Gastrocnemius medialis (tissue), 4 donors: ENCODE measurements at regions of chr19 and their contacts with region 1.

Region 1: DNA sequence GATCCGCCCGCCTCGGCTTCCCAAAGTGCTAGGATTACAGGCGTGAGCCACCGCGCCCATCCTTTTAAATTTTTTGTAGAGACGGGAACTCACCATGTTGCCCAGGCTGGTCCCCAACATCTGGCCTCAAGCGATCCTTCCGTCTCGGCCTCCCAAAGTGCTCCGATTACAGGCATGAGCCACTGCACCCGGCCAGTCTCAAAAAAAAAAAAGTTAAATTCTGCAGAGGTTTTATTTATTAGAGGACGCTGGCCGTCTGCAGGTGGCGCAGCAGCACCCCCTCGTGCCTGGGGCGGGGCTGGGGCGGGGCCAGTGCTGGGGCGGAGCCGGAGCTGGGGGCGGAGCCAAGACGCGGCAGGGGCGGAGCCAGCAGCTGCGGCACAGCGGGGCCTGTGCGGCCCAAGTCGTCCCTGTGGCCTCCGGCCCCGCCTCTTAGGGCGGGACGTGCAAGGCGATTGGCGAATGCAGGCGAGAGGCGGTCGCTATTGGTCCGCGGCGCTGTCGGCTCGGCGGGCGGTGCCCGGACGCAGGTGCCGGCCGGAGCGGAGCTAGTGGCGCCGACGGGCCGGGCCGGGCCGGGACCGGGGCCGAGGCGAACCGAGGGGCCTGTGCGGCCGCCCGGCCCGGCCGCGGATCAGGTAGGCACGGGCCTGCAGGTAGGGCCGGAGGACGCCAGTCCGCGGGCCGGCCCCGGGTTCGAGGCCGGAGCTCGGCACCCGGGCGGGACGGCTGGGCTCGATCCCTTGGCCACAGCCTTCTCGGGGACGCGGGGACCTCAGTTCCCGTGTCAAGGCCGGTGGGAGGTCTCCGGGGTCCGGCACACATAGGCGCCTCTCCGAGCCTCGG is at the start of gene MARCHF2:
- DNase-seq: peak; percentile 93 to 97
- ATAC-seq: peak; percentile 98 to 99
- H3K4me3 ChIP-seq: peak within 1 kb of the TSS; percentile 67 to 83 (median 69)
- H3K27ac ChIP-seq: peak within 1 kb of the TSS; percentile 65 to 86 (median 76)
- H3K4me1 ChIP-seq: peaks cover 14 to 27% of the 10 kb centered on the region in 2 donors
- H3K27me3 ChIP-seq: no peaks in the 10 kb centered on the region
- CTCF ChIP-seq: peak; percentile 14 to 84 (median 62)
- POLR2A ChIP-seq: peak; percentile 63 to 74
- total RNA-seq, gene MARCHF2: 173 to 183 (median 176) TPM

Region 2: DNA sequence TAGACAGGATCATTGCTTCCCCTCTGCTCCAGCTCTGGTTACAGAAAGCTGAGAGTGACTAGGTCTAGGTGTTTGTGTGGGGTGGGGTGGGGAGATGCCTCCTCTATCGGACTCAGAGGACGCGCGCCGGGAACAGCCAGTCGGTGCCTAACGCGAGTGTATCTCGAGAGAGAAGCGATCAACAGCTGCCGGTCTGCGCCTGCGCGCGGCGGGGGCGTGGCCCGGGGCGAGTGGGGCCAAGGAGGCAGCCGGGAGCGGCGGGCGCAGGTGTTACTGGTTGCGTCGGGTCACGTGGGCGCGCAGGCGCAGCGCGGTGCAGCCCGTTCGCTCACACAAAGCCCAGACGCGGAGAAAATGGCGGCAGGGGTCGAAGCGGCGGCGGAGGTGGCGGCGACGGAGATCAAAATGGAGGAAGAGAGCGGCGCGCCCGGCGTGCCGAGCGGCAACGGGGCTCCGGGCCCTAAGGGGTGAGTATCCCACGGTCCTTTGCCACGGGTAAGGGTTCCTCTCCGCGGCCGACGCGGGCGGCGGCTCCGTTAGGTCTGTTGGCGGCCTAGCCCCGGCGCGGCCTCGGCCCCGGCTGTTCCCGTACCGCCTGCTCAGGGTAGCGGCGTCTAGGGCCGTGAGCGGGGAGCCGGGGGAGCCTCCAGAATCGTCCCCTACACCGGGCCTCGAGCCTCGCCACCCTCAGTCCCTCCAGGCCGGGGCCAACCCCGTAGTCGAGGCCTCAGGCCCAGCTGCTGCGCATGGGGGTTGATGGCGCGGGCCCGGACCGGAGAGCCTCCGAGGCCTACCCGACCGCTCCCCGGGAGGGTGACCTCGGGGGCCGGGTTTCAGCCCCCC is 31.9 kb after region 1 on chr19 and contains the start of gene HNRNPM:
- in situ Hi-C with region 1: no loop called
- intact Hi-C with region 1: loop called (anchors 1 kb)
- DNase-seq: peak; percentile 98 to 99
- ATAC-seq: peak; percentile 93 to 94
- H3K4me3 ChIP-seq: peak within 1 kb of the TSS; percentile 86 to 92 (median 90)
- H3K27ac ChIP-seq: peak within 1 kb of the TSS; percentile 91 to 98 (median 97)
- H3K4me1 ChIP-seq: peaks cover 38 to 41% of the 10 kb centered on the region in 2 donors
- H3K27me3 ChIP-seq: no peaks in the 10 kb centered on the region
- CTCF ChIP-seq: no peak
- POLR2A ChIP-seq: peak; percentile 97
- total RNA-seq, gene HNRNPM: 42.5 to 74.6 (median 57.8) TPM

Region 3: GRCh38 chr19:8505680-8506401 is 92.8 kb after region 1 on chr19:
- in situ Hi-C with region 1: loop called (anchors 5 to 10 kb)
- intact Hi-C with region 1: loop called (anchors 1 kb)
- DNase-seq: peak; percentile 61 to 88
- ATAC-seq: peak; percentile 90 to 91
- H3K4me3 ChIP-seq: peak overlapping the region; percentile 55 to 71 (median 68)
- H3K27ac ChIP-seq: peak overlapping the region; percentile 71 to 80 (median 72)
- H3K4me1 ChIP-seq: peaks cover 5 to 11% of the 10 kb centered on the region in 2 donors
- H3K27me3 ChIP-seq: no peaks in the 10 kb centered on the region
- CTCF ChIP-seq: peak; percentile 77 to 93 (median 91)
- POLR2A ChIP-seq: peak; percentile 31 to 48

Region 4: GRCh38 chr19:8580710-8581281 is 167.8 kb after region 1 on chr19:
- in situ Hi-C with region 1: no loop called
- intact Hi-C with region 1: loop called (anchors 2 kb)
- DNase-seq: peak; percentile 37 to 50
- ATAC-seq: peak in 1 of 2 donors; percentile 41
- H3K4me3 ChIP-seq: no peak overlapping the region
- H3K27ac ChIP-seq: no peak overlapping the region
- H3K4me1 ChIP-seq: no peaks in the 10 kb centered on the region
- H3K27me3 ChIP-seq: peaks cover 0 to 14% (median 11%) of the 10 kb centered on the region in 3 donors
- CTCF ChIP-seq: peak; percentile 70 to 90 (median 82)
- POLR2A ChIP-seq: no peak